PC-9 (cell line): ENCODE measurements at regions of chr19 and their contacts with region 1.

Region 1: DNA sequence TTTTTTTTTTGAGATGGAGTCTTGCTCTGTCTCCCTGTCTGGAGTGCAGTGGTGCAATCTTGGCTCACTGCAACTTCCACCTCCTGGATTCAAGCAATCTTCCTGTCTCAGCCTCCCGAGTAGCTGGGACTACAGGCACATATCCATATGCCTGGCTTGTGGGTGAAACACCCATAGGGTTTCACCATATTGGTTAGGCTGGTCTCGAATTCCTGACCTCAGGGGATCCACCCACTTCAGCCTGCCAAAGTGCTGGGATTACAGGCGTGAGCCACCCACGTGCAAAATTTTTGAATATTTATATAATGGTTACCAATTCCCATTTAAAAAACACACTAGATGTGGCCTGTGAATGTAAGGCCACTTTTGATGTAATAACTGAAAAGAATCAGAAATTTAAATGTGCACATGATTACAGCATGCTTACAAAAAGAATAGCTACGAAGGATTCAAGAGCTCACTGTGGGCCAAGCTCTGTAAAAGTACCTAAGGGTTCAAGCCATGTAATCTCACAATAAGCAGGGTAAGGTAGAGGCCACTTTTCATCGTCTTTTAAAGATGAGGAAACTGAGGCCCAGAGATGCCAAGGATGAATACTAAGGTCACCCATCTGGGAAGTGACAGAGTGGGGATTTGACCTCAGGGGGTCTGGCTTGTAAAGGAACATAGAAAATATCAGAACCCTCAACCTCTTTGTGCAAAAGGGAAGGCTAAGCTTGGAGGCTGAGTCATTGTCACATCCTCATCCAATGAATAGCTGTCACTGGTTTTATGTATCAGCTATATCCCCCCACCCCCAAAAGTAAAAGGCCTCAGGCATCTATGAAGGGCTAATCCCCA is 17.8 kb downstream of the TNFSF14 start:
- DNase-seq: no peak
- H3K4me3 ChIP-seq: no peak overlapping the region
- H3K27ac ChIP-seq: no peak overlapping the region
- H3K4me1 ChIP-seq: no peaks in the 10 kb centered on the region
- H3K27me3 ChIP-seq: no peaks in the 10 kb centered on the region
- CTCF ChIP-seq: no peak

Region 2: DNA sequence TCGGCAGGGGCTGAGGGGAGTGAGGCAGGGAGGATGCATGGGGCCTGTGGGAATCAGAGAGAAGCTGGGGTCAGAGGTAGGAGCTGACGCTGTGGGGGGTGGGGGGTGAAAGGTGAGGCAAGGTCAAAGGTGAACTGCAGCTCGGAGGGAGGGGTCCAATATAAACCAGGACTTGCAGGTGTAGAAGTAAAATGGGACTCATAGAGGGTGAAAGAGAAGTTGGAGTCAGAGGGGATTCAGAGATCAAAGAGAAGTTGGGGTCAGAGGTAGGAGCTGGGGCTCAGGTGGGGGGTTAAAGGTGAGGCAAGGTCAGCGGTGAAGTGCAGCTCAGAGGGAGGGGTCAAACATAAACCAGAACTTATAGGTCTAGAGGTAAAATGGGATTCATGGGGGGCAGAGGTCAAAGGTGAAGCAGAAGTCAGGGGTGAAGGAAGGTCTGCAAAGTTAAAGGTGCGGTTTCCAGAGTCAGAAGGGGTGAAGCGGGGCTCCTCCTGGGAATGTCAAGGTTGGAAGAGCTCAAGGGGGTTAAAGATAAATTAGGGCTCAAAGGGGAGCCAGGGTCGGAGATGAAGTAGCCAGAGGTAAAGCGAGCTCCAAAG is 157.6 kb before region 1 on chr19:
- CTCF ChIA-PET with region 1: no interaction called
- POLR2A ChIA-PET with region 1: interaction called, 44 read pairs
- intact Hi-C with region 1: no loop called
- DNase-seq: no peak
- H3K4me3 ChIP-seq: no peak overlapping the region
- H3K27ac ChIP-seq: no peak overlapping the region
- H3K4me1 ChIP-seq: no peaks in the 10 kb centered on the region
- H3K27me3 ChIP-seq: no peaks in the 10 kb centered on the region
- CTCF ChIP-seq: no peak

Region 3: DNA sequence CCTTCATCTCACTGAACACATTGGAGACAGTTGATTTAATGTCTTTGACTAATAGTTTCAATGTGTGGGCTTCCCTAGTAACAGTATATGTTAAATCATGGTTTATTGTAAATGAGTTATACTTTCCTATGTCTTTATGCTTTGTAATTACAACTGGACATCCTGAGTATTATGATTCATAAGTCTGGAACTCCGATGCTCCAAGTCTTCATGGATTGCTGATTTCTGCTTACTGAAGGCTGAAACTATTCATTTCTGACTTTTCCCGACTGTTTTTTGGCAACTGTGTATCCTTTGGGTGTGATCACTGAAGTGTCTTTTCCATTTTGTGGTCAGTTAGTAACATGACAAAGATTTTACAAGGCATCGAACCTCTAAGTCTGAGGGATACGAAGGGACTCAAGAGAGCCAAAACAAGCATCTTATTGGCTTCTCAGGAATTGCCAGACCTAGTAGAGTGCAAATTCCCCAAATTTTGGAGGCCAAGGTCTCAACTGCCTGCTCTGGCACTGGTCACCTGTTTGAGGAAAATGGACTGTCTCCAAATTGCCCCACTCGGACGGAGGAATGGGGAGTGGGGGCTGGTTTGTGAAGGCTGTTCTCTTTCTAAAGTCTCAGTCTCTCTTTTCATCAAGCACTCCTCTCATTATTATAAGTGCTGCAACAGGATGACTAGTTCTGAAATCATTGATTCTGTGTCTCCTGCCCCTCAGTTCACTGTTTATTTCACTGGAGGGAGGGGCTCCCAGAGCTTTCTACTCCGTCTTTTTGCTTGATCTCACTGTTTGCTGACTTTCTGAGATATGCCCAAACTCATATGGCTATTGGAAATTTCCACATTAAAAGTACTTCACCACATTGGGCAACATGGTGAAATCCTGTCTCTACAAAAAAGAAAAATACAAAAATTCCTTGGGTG is 41.0 kb before region 1 on chr19:
- CTCF ChIA-PET with region 1: no interaction called
- POLR2A ChIA-PET with region 1: no interaction called
- intact Hi-C with region 1: no loop called
- DNase-seq: peak in 1 of 2 experiments; percentile 73
- H3K4me3 ChIP-seq: no peak overlapping the region
- H3K27ac ChIP-seq: peak overlapping the region; percentile 63
- H3K4me1 ChIP-seq: peaks cover 13% of the 10 kb centered on the region; the same call in 1 of the 2 replicates
- H3K27me3 ChIP-seq: no peaks in the 10 kb centered on the region
- CTCF ChIP-seq: no peak